ENCODE measurements at regions of chr20 and their contacts with region 1.

Region 1: GRCh38 chr20:34768096-34768495 is 57.4 kb downstream of the NCOA6 start:
- DNase-seq: no peak
- H3K4me3 ChIP-seq: no peak overlapping the region
- H3K27ac ChIP-seq: no peak overlapping the region
- H3K4me1 ChIP-seq: peaks cover 0 to 3% (median 0%) of the 10 kb centered on the region in 4 donors
- H3K27me3 ChIP-seq: no peaks in the 10 kb centered on the region
- CTCF ChIP-seq: no peak
- EP300 ChIP-seq: no peak
- POLR2A ChIP-seq: no peak

Region 2: GRCh38 chr20:34579979-34580940 is 187.8 kb before region 1 on chr20:
- intact Hi-C with region 1: loop called (anchors 5 kb)
- DNase-seq: no peak
- H3K4me3 ChIP-seq: no peak overlapping the region
- H3K27ac ChIP-seq: no peak overlapping the region
- H3K4me1 ChIP-seq: peaks cover 0 to 10% (median 5%) of the 10 kb centered on the region in 4 donors
- H3K27me3 ChIP-seq: no peaks in the 10 kb centered on the region
- CTCF ChIP-seq: no peak
- EP300 ChIP-seq: no peak
- POLR2A ChIP-seq: no peak